ENCODE measurements at regions of chr14 and their contacts with region 1.

Region 1: DNA sequence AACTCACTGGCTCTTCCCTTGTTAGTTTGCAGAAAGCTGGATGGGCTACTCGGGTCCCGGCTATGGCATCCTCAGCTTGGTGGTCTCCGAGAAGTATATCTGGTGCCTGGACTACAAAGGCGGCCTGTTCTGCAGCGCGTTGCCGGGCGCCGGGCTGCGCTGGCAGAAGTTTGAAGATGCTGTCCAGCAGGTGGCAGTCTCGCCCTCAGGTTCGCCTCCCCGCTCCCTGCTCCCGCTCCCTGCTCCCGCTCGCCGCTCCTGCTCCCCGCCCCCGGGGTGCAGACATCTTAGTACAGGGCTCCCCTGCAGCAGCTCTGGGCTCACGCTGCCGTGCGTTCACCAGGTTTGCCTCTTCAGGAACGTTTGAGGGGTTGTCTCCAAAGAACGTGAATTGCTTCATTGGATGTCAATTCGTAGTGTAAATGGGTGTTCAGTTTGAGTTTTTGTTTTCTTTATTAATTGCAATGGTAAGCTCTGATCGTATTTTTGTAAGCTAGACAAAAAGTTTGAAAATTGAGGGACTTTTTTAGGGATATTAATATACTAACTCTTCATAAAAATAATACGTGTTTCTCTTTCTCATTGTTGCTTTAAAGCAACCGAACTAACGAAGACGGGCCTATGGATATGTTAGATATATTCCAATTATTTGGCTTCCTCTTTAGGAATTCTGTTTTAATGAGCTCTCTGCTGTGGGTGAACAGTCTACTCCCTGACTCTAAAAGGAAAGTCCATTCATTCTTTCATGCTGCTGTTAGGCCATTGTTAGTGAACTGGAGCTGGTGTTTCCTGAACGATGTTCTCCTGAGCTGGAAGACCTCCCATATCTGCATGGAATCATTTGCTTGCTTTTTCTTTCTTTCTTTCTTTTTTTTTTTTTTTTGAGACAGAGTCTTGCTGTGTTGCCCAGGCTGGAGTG is 71.3 kb downstream of the ANKRD9 start:
- DNase-seq: peak; percentile 92
- ATAC-seq: peak; percentile 99
- H3K4me3 ChIP-seq: peak overlapping the region; percentile 30
- H3K27ac ChIP-seq: no peak overlapping the region
- H3K4me1 ChIP-seq: no peaks in the 10 kb centered on the region
- H3K27me3 ChIP-seq: no peaks in the 10 kb centered on the region
- CTCF ChIP-seq: peak; percentile 80

Region 2: GRCh38 chr14:102154821-102155549 is 283.3 kb before region 1 on chr14:
- intact Hi-C with region 1: no loop called
- DNase-seq: no peak
- ATAC-seq: no peak
- H3K4me3 ChIP-seq: no peak overlapping the region
- H3K27ac ChIP-seq: no peak overlapping the region
- H3K4me1 ChIP-seq: peaks cover 6% of the 10 kb centered on the region
- H3K27me3 ChIP-seq: no peaks in the 10 kb centered on the region
- CTCF ChIP-seq: no peak

Region 3: GRCh38 chr14:102171177-102172020 is 266.9 kb before region 1 on chr14:
- intact Hi-C with region 1: no loop called
- DNase-seq: no peak
- ATAC-seq: no peak
- H3K4me3 ChIP-seq: no peak overlapping the region
- H3K27ac ChIP-seq: no peak overlapping the region
- H3K4me1 ChIP-seq: no peaks in the 10 kb centered on the region
- H3K27me3 ChIP-seq: no peaks in the 10 kb centered on the region
- CTCF ChIP-seq: no peak

Region 4: GRCh38 chr14:102390064-102390855 is 48.0 kb before region 1 on chr14:
- intact Hi-C with region 1: no loop called
- DNase-seq: no peak
- ATAC-seq: no peak
- H3K4me3 ChIP-seq: no peak overlapping the region
- H3K27ac ChIP-seq: no peak overlapping the region
- H3K4me1 ChIP-seq: peaks cover 7% of the 10 kb centered on the region
- H3K27me3 ChIP-seq: no peaks in the 10 kb centered on the region
- CTCF ChIP-seq: no peak

Region 5: DNA sequence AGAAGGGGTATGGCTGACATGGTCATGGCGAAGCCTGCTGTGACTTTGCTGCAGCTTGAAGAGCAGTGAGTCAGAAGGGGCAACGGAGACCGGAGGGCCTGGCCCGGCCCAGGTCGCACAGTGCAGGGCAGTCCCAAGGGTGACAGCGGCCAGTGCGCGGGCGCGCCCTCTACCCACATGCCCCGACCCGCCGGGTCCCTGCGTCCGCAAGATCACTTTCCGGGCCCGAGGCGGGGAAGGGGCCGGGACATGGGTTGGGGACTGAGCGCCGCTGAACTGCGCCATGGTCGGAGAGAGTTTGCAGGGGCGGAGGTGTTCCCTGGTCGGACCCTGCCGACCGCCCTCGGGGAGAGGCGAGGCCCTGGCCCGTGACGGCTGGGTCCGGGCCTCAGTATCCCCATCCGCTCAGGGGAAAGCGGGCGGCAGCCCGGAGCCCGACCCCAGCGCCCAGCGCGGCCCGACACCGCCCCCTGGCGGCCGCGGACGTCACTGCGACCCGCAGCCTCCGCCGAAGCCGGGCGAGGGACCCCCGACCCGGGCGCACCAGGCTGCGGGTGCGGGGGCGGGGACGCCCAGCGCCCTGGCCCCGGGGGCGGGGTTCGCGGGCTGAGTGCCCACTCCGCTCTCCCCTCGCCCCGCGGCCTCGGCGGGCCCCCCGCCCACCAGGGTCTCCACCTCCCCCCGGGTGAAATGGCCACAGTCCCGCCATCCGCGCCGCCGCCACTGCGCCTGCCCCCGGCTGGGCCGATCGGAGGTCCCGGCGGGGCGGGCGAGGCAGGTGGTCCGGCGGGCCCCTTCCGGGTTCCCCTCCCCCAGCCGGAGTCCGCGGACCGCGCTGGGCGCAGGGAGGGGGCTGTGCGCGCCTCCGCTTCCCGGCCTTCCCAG is 78.5 kb after region 1 on chr14:
- intact Hi-C with region 1: loop called (anchors 5 kb)
- DNase-seq: peak; percentile 82
- ATAC-seq: peak; percentile 90
- H3K4me3 ChIP-seq: peak overlapping the region; percentile 64
- H3K27ac ChIP-seq: peak overlapping the region; percentile 51
- H3K4me1 ChIP-seq: peaks cover 5% of the 10 kb centered on the region
- H3K27me3 ChIP-seq: no peaks in the 10 kb centered on the region
- CTCF ChIP-seq: peak; percentile 75

Region 6: GRCh38 chr14:102591889-102592763 is 153.9 kb after region 1 on chr14 and contains the start of gene RCOR1:
- intact Hi-C with region 1: no loop called
- DNase-seq: peak; percentile 99
- ATAC-seq: peak; percentile 95
- H3K4me3 ChIP-seq: peak within 1 kb of the TSS; percentile 95
- H3K27ac ChIP-seq: peak within 1 kb of the TSS; percentile 96
- H3K4me1 ChIP-seq: peaks cover 14% of the 10 kb centered on the region
- H3K27me3 ChIP-seq: no peaks in the 10 kb centered on the region
- CTCF ChIP-seq: no peak
- total RNA-seq, gene RCOR1: 43.6 TPM

Measured in upper lobe of right lung (tissue), 1 donor.